Dorsolateral prefrontal cortex (tissue), 120 donors: ENCODE measurements at regions of chr1 and their contacts with region 1.

Region 1: DNA sequence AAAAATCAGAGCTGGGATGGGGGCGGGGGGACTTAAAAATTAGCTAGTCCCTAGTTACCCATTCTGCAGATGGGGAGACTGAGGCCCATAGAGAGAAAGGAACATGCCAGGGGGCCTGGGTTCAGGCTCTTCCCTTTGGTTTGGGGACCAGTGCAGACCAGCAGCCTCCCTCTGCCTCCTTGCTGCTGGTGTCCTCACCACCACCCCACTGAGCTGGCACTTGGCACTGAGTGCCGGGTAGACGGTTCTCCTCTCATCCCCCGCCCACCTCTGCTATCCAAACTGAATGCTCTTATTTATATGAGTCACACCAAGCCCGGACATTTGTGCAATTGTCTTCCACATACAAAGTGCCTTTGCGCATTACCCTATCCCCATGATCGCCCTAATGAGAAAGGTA is 39.2 kb downstream of the CAMK2N1 start:
- DNase-seq: peak in 6 of 10 donors; percentile 56 to 87 (median 66)
- H3K4me3 ChIP-seq: no peak overlapping the region
- H3K27ac ChIP-seq: peak overlapping the region in 34 of 59 donors; percentile 2 to 97 (median 88)
- H3K27me3 ChIP-seq: no peaks in the 10 kb centered on the region
- CTCF ChIP-seq: no peak

Region 2: DNA sequence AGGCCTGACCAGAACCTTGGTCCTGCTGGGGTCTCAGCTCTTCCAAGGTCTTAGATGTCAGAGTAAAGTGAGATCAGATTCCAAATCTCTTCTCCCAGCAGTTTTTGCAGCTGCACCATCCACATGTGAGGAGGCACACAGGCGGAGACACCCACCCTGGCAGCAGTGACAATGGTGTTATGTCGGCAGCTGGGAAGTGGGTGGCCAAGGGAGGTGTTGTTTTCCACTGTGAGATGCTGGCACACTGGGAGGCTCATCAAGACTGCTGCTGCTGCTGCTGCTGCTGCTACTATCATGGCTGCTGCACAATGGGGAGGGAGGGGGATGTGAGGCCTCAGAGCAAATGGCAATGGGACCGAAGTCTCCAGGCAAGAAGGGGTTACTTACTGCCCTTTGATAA is 15.6 kb after region 1 on chr1:
- intact Hi-C with region 1: loop called in 1 of 2 experiments (anchors 2 kb)
- DNase-seq: peak in 9 of 10 donors; percentile 46 to 92 (median 82)
- H3K4me3 ChIP-seq: no peak overlapping the region
- H3K27ac ChIP-seq: peak overlapping the region in 57 of 59 donors; percentile 16 to 91 (median 81)
- H3K27me3 ChIP-seq: no peaks in the 10 kb centered on the region
- CTCF ChIP-seq: no peak

Region 3: DNA sequence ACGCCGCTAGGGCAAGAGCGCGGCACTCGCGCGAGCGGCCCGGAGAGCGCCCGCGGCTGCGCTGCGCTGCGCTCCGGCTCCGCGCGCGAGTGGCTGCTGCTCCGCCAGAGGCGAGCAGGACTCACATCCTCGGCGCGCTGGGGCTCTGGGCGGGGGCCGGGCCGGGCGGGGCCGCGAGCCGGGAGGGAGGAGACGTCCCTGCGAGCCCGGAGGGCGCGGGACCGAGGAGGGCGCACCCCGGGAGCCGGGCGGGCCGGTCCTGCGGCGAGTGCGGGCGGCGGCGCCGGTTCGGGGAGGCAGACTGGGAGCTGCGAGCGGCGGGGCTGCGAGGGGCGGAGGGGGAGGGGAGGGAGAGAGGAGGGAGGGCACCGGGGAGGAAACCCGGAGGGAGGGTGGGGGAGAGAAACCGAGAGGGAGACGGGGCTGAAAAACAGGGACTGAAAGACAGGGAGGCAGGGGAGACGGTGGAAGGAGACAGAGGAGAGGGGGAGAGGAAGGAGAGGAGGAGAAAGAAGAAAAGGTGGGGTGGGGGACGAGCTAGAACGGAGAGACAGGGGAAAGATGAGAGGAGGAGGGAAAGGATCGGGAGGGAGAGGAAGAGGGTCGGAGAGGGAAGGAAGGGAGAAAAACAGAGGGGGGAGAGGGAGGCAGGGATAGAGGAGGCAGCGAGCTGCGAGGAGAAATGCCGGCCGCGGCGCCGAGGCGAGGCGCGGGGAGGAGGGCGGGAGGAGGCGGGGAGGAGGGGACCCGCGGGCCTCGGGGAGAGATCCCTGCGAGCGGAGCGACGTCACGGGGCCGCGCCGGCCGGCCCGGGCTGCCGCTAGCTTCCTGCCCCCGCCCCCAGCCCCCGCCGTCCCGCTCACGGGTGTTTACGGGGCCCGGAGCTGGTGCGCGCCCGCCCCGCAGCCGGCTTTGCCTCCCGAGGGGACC is 39.0 kb after region 1 on chr1 and contains the start of gene CAMK2N1:
- intact Hi-C with region 1: loop called (anchors 2 to 5 kb)
- DNase-seq: peak; percentile 52 to 93 (median 86)
- H3K4me3 ChIP-seq: peak within 1 kb of the TSS; percentile 64 to 97 (median 89)
- H3K27ac ChIP-seq: peak within 1 kb of the TSS; percentile 92 to 100 (median 99)
- H3K27me3 ChIP-seq: peaks cover 0 to 3% (median 0%) of the 10 kb centered on the region in 45 donors
- CTCF ChIP-seq: peak in 2 of 56 donors; percentile 14 to 19
- total RNA-seq, gene CAMK2N1: 248 to 798 (median 441) TPM